ENCODE measurements at regions of chr20 and their contacts with region 1.

Region 1: DNA sequence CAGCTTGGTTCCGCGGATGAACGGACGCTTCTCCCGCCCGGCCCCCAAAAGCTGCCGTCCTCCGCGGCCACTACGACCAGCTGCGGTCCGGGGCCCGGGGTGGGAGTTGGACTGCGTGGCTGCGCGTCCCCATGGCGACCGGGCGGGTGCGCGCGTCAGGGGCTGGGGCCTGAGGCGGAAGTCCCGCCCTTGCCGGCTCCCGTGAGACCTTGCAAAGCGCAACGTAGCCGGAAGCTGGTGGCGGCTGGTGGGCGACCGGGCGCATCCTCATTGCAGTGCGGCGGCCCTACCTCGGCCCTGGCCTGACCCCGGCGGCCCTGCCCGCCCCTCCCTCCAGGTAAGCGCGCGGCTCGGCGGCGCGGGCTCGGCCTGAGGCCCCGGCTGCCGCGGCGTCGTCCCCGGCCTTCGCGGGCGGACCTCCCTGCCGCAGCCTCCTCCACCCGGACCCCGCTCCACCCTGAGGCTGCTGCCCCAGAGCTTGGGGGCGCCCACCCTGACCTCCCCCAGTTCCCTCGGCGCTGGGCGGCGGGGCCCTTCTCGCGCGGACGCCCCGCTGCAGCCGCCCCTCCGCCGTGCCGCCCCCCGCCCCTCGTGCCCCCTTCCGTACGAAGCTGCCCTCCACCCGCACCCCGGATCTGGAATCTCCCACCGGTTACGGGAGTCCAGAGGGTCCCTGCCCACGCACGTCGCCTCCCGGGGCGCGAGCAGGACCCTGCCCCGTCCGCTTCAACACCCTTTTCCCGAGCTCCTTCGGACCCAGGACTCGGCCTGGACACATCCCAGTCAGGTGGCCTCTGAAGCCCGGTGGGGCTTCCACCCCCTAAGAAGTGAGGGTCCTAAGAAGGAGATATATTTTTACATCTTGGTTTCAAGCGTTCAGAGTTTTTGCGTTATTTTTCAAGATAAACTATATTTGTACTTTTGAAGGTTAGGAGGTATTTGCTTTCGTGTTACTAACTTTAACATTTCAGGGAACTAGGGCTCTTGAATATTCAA is at the start of gene ARFGAP1:
- DNase-seq: peak; percentile 91 to 92
- ATAC-seq: peak; percentile 92 to 98 (median 98)
- H3K4me3 ChIP-seq: peak within 1 kb of the TSS; percentile 76 to 98 (median 86)
- H3K27ac ChIP-seq: peak within 1 kb of the TSS in 9 of 10 donors; percentile 58 to 84 (median 73)
- H3K4me1 ChIP-seq: peaks cover 5 to 29% (median 21%) of the 10 kb centered on the region in 9 donors
- H3K27me3 ChIP-seq: peaks cover 0 to 3% (median 0%) of the 10 kb centered on the region in 7 donors
- CTCF ChIP-seq: no peak
- total RNA-seq, gene ARFGAP1: 20.4 to 40.4 (median 28.4) TPM

Region 2: DNA sequence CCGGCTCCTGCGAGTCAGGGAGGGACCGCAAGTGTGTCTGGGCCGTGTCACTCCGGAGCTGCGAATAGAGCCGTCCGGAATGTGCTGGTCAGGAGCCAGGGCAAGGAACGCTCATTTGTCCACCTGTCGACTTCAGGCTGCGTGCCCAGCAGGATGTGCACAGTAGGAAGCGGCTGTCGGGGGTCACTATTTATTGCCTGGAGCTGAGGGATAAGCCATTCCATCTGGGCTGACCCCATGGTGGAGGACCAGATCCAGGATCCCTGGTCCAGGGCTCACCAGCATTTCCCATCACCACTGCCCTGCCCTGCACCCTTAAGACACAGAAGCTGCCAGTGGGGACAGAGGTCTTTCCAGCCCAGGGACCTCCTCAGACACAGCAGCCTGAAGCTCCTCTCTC is 549.5 kb before region 1 on chr20:
- intact Hi-C with region 1: no loop called
- DNase-seq: no peak
- ATAC-seq: peak in 2 of 8 donors; percentile 16 to 18
- H3K4me3 ChIP-seq: no peak overlapping the region
- H3K27ac ChIP-seq: no peak overlapping the region
- H3K4me1 ChIP-seq: peaks cover 0 to 9% (median 0%) of the 10 kb centered on the region in 9 donors
- H3K27me3 ChIP-seq: peaks cover 0 to 76% (median 62%) of the 10 kb centered on the region in 7 donors
- CTCF ChIP-seq: no peak

Region 3: GRCh38 chr20:63216041-63216848 is 56.6 kb before region 1 on chr20 and contains the start of gene YTHDF1:
- intact Hi-C with region 1: loop called in 1 of 10 experiments (anchors 5 kb)
- DNase-seq: peak; percentile 95 to 97
- ATAC-seq: peak; percentile 97 to 99 (median 98)
- H3K4me3 ChIP-seq: peak within 1 kb of the TSS; percentile 72 to 98 (median 94)
- H3K27ac ChIP-seq: peak within 1 kb of the TSS; percentile 66 to 93 (median 85)
- H3K4me1 ChIP-seq: peaks cover 15 to 48% (median 40%) of the 10 kb centered on the region in 9 donors
- H3K27me3 ChIP-seq: peaks cover 0 to 9% (median 0%) of the 10 kb centered on the region in 7 donors
- CTCF ChIP-seq: no peak
- total RNA-seq, gene YTHDF1: 18.3 to 31.6 (median 21.7) TPM